Naive thymus-derived CD4-positive, alpha-beta T cell (primary cell): ENCODE measurements at regions of chr7 and their contacts with region 1.

Region 1: GRCh38 chr7:33109005-33109757 is at the start of gene RP9:
- DNase-seq: peak; percentile 65 to 85 (median 77)
- ATAC-seq: peak; percentile 96
- H3K4me3 ChIP-seq: peak within 1 kb of the TSS; percentile 83
- H3K4me3 Mint-ChIP-seq: peak within 1 kb of the TSS; percentile 83 to 96 (median 90)
- H3K27ac ChIP-seq: peak within 1 kb of the TSS; percentile 86
- H3K27ac Mint-ChIP-seq: peak within 1 kb of the TSS; percentile 25 to 95 (median 77)
- H3K4me1 ChIP-seq: peaks cover 21 to 23% of the 10 kb centered on the region in 2 donors
- H3K4me1 Mint-ChIP-seq: peaks cover 25 to 52% (median 45%) of the 10 kb centered on the region in 7 donors
- H3K27me3 ChIP-seq: no peaks in the 10 kb centered on the region
- H3K27me3 Mint-ChIP-seq: peaks cover 5 to 32% (median 16%) of the 10 kb centered on the region in 5 donors
- total RNA-seq, gene RP9: 12.7 to 23.3 (median 14.7) TPM

Region 2: DNA sequence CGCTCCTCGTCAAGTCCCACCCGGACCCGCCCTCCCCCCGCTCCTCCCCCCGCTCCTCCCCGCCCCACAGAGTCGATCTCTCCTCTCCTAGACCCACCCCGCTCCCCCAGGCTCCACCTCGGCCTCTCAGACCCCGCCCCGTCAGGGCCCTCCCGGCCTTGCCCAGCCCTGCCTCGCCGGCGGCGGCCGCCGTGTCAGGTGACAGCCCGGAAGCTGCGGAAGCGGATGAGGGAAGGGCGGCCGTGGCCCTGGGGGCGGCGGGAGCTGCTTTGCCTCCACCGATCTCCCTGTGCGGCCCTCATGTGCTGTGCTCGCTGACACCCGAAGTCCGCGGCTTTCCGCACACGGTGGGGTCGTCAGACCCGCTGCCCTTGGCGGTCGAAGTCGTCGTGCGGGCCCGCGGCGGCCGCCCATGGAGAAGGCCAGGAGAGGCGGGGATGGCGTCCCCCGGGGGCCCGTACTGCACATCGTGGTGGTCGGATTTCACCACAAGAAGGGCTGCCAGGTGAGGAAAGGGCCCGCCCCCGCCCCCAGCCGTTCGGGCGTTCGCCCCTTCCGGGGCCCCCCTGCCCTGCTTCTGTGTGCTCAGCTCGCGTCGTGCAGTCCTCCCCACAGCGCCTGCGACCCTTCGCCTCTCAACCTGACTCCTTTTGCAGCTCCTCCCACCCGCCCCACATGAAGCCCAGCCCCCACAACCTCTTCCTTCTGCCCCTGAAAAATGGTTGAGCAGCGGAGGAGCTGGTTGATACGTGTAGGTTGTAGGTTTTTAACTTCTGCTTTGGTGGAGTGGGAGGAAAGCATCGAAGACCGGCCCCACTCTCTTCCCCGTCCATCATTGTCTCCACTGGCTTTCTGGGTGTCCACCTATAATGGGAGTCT is 613.6 kb before region 1 on chr7 and contains the start of gene AVL9:
- CTCF ChIA-PET with region 1: no interaction called
- POLR2A ChIA-PET with region 1: interaction called, 3 read pairs
- intact Hi-C with region 1: loop called (anchors 1 to 2 kb)
- DNase-seq: peak; percentile 96 to 99 (median 98)
- ATAC-seq: peak; percentile 98
- H3K4me3 ChIP-seq: peak within 1 kb of the TSS; percentile 88
- H3K4me3 Mint-ChIP-seq: peak within 1 kb of the TSS; percentile 86 to 100 (median 96)
- H3K27ac ChIP-seq: peak within 1 kb of the TSS; percentile 96
- H3K27ac Mint-ChIP-seq: peak within 1 kb of the TSS; percentile 92 to 98 (median 97)
- H3K4me1 ChIP-seq: peaks cover 12 to 25% of the 10 kb centered on the region in 2 donors
- H3K4me1 Mint-ChIP-seq: peaks cover 22 to 50% (median 40%) of the 10 kb centered on the region in 7 donors
- H3K27me3 ChIP-seq: no peaks in the 10 kb centered on the region
- H3K27me3 Mint-ChIP-seq: no peaks in the 10 kb centered on the region
- total RNA-seq, gene AVL9: 30.9 to 57.9 (median 45.3) TPM

Region 3: GRCh38 chr7:32803406-32804141 is 305.6 kb before region 1 on chr7:
- CTCF ChIA-PET with region 1: interaction called, 5 read pairs
- POLR2A ChIA-PET with region 1: no interaction called
- intact Hi-C with region 1: loop called (anchors 1 kb)
- DNase-seq: no peak
- ATAC-seq: no peak
- H3K4me3 ChIP-seq: no peak overlapping the region
- H3K4me3 Mint-ChIP-seq: no peak overlapping the region
- H3K27ac ChIP-seq: no peak overlapping the region
- H3K27ac Mint-ChIP-seq: no peak overlapping the region
- H3K4me1 ChIP-seq: no peaks in the 10 kb centered on the region
- H3K4me1 Mint-ChIP-seq: peaks cover 0 to 3% (median 0%) of the 10 kb centered on the region in 7 donors
- H3K27me3 ChIP-seq: no peaks in the 10 kb centered on the region
- H3K27me3 Mint-ChIP-seq: peaks cover 0 to 8% (median 3%) of the 10 kb centered on the region in 5 donors

Region 4: GRCh38 chr7:32905175-32905662 is 204.0 kb before region 1 on chr7:
- CTCF ChIA-PET with region 1: no interaction called
- POLR2A ChIA-PET with region 1: no interaction called
- intact Hi-C with region 1: loop called in 1 of 2 experiments (anchors 1 kb)
- DNase-seq: peak; percentile 37 to 88 (median 82)
- ATAC-seq: peak; percentile 92
- H3K4me3 ChIP-seq: peak overlapping the region; percentile 63
- H3K4me3 Mint-ChIP-seq: peak overlapping the region; percentile 73 to 89 (median 85)
- H3K27ac ChIP-seq: peak overlapping the region; percentile 84
- H3K27ac Mint-ChIP-seq: peak overlapping the region; percentile 86 to 96 (median 94)
- H3K4me1 ChIP-seq: peaks cover 6 to 16% of the 10 kb centered on the region in 2 donors
- H3K4me1 Mint-ChIP-seq: peaks cover 4 to 27% (median 24%) of the 10 kb centered on the region in 7 donors
- H3K27me3 ChIP-seq: no peaks in the 10 kb centered on the region
- H3K27me3 Mint-ChIP-seq: no peaks in the 10 kb centered on the region

Region 5: GRCh38 chr7:33062782-33063443 is 46.3 kb before region 1 on chr7:
- CTCF ChIA-PET with region 1: interaction called, 4 read pairs
- POLR2A ChIA-PET with region 1: interaction called, 15 read pairs
- intact Hi-C with region 1: loop called (anchors 1 kb)
- DNase-seq: peak; percentile 90 to 95 (median 93)
- ATAC-seq: peak; percentile 97
- H3K4me3 ChIP-seq: peak overlapping the region; percentile 96
- H3K4me3 Mint-ChIP-seq: peak overlapping the region; percentile 91 to 98 (median 96)
- H3K27ac ChIP-seq: peak overlapping the region; percentile 82
- H3K27ac Mint-ChIP-seq: peak overlapping the region; percentile 92 to 99 (median 96)
- H3K4me1 ChIP-seq: peaks cover 23 to 32% of the 10 kb centered on the region in 2 donors
- H3K4me1 Mint-ChIP-seq: peaks cover 20 to 50% (median 39%) of the 10 kb centered on the region in 7 donors
- H3K27me3 ChIP-seq: no peaks in the 10 kb centered on the region
- H3K27me3 Mint-ChIP-seq: peaks cover 0 to 14% (median 0%) of the 10 kb centered on the region in 5 donors

Region 6: GRCh38 chr7:33143996-33144718 is 35.0 kb after region 1 on chr7:
- CTCF ChIA-PET with region 1: no interaction called
- POLR2A ChIA-PET with region 1: no interaction called
- intact Hi-C with region 1: no loop called
- DNase-seq: no peak
- ATAC-seq: no peak
- H3K4me3 ChIP-seq: no peak overlapping the region
- H3K4me3 Mint-ChIP-seq: no peak overlapping the region
- H3K27ac ChIP-seq: no peak overlapping the region
- H3K27ac Mint-ChIP-seq: no peak overlapping the region
- H3K4me1 ChIP-seq: no peaks in the 10 kb centered on the region
- H3K4me1 Mint-ChIP-seq: peaks cover 3 to 21% (median 10%) of the 10 kb centered on the region in 7 donors
- H3K27me3 ChIP-seq: no peaks in the 10 kb centered on the region
- H3K27me3 Mint-ChIP-seq: peaks cover 0 to 2% (median 0%) of the 10 kb centered on the region in 5 donors